B cell (primary cell): ENCODE measurements at regions of chr3 and their contacts with region 1.

Region 1: DNA sequence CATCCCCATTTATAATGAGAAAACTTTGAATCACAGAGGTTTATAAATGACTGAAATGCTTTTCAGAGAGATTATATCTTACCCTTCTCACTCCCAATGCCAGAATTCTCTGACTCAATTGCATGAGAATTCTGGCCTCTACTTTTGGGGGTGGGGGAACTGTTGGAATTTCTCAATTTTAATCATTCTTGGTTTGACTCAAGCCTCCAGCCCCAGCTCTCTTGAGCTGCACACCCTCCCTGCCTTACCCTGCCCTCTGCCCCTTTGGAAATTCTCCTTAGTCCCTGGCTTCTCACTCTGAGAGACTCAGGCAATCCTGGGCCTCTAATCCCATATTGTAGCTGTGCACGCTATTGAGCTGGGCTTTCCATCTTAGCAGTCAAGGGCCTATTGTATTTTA is 44.2 kb downstream of the ZNF589 start:
- DNase-seq: no peak
- ATAC-seq: no peak
- H3K4me3 ChIP-seq: no peak overlapping the region
- H3K4me3 Mint-ChIP-seq: no peak overlapping the region
- H3K27ac ChIP-seq: no peak overlapping the region
- H3K27ac Mint-ChIP-seq: no peak overlapping the region
- H3K4me1 ChIP-seq: no peaks in the 10 kb centered on the region
- H3K4me1 Mint-ChIP-seq: peaks cover 6% of the 10 kb centered on the region
- H3K27me3 ChIP-seq: no peaks in the 10 kb centered on the region
- H3K27me3 Mint-ChIP-seq: no peaks in the 10 kb centered on the region
- CTCF ChIP-seq: no peak

Region 2: GRCh38 chr3:48367201-48367600 is 82.1 kb after region 1 on chr3:
- CTCF ChIA-PET with region 1: no interaction called
- POLR2A ChIA-PET with region 1: no interaction called
- intact Hi-C with region 1: loop called (anchors 10 kb)
- DNase-seq: no peak
- ATAC-seq: no peak
- H3K4me3 ChIP-seq: no peak overlapping the region
- H3K4me3 Mint-ChIP-seq: no peak overlapping the region
- H3K27ac ChIP-seq: no peak overlapping the region
- H3K27ac Mint-ChIP-seq: no peak overlapping the region
- H3K4me1 ChIP-seq: no peaks in the 10 kb centered on the region
- H3K4me1 Mint-ChIP-seq: no peaks in the 10 kb centered on the region
- H3K27me3 ChIP-seq: no peaks in the 10 kb centered on the region
- H3K27me3 Mint-ChIP-seq: no peaks in the 10 kb centered on the region
- CTCF ChIP-seq: no peak

Region 3: GRCh38 chr3:49422379-49423248 is 1137.5 kb after region 1 on chr3 and contains the start of gene AMT:
- CTCF ChIA-PET with region 1: no interaction called
- POLR2A ChIA-PET with region 1: no interaction called
- intact Hi-C with region 1: no loop called
- DNase-seq: no peak
- ATAC-seq: no peak
- H3K4me3 ChIP-seq: no peak within 1 kb of the TSS
- H3K4me3 Mint-ChIP-seq: peak within 1 kb of the TSS; percentile 57
- H3K27ac ChIP-seq: no peak within 1 kb of the TSS
- H3K27ac Mint-ChIP-seq: peak within 1 kb of the TSS; percentile 37
- H3K4me1 ChIP-seq: peaks cover 6 to 24% of the 10 kb centered on the region in 2 donors
- H3K4me1 Mint-ChIP-seq: peaks cover 26% of the 10 kb centered on the region
- H3K27me3 ChIP-seq: no peaks in the 10 kb centered on the region
- H3K27me3 Mint-ChIP-seq: no peaks in the 10 kb centered on the region
- CTCF ChIP-seq: no peak
- total RNA-seq, gene AMT: 14.0 TPM in 2 replicates

Region 4: GRCh38 chr3:49972656-49973055 is 1687.5 kb after region 1 on chr3:
- CTCF ChIA-PET with region 1: no interaction called
- POLR2A ChIA-PET with region 1: no interaction called
- intact Hi-C with region 1: no loop called
- DNase-seq: no peak
- ATAC-seq: no peak
- H3K4me3 ChIP-seq: no peak overlapping the region
- H3K4me3 Mint-ChIP-seq: no peak overlapping the region
- H3K27ac ChIP-seq: no peak overlapping the region
- H3K27ac Mint-ChIP-seq: no peak overlapping the region
- H3K4me1 ChIP-seq: no peaks in the 10 kb centered on the region
- H3K4me1 Mint-ChIP-seq: peaks cover 6% of the 10 kb centered on the region
- H3K27me3 ChIP-seq: no peaks in the 10 kb centered on the region
- H3K27me3 Mint-ChIP-seq: no peaks in the 10 kb centered on the region
- CTCF ChIP-seq: no peak